Activated CD4-positive, alpha-beta T cell treated with anti-CD3 and anti-CD28 coated beads, Interleukin-2, amount 10 ng/mL, durations not matched to agents 24 days and 14 days (primary cell): ENCODE measurements at regions of chr22 and their contacts with region 1.

Region 1: GRCh38 chr22:24284747-24285203 is 14.1 kb downstream of the SPECC1L start:
- DNase-seq: peak; percentile 62
- H3K4me3 Mint-ChIP-seq: peak overlapping the region; percentile 47
- H3K27ac Mint-ChIP-seq: peak overlapping the region; percentile 86
- H3K4me1 Mint-ChIP-seq: peaks cover 37% of the 10 kb centered on the region
- H3K27me3 Mint-ChIP-seq: peaks cover 3% of the 10 kb centered on the region

Region 2: DNA sequence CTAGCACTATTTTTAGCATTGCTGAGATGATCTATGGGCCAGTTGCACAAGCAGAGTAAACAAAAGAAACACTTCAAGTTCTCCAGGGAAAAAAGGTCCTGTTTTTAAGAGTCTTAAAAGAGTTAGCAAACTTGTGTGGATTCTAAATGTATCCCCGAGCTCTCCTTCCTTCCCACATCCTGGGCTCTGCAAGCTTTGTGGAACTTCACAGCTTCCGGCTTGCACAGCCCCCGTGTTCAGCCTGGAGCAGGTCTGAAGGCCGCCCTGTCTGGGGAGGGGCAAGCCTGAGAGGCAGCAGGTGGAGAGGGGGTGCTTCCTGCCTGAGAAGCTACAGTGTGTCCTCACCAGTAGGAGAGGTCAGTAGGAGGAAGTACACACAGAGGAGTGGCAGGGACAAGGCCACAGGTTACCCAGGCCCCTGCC is 138.6 kb before region 1 on chr22:
- intact Hi-C with region 1: no loop called
- DNase-seq: peak; percentile 78
- H3K4me3 Mint-ChIP-seq: peak overlapping the region; percentile 57
- H3K27ac Mint-ChIP-seq: peak overlapping the region; percentile 50
- H3K4me1 Mint-ChIP-seq: peaks cover 41% of the 10 kb centered on the region
- H3K27me3 Mint-ChIP-seq: no peaks in the 10 kb centered on the region

Region 3: DNA sequence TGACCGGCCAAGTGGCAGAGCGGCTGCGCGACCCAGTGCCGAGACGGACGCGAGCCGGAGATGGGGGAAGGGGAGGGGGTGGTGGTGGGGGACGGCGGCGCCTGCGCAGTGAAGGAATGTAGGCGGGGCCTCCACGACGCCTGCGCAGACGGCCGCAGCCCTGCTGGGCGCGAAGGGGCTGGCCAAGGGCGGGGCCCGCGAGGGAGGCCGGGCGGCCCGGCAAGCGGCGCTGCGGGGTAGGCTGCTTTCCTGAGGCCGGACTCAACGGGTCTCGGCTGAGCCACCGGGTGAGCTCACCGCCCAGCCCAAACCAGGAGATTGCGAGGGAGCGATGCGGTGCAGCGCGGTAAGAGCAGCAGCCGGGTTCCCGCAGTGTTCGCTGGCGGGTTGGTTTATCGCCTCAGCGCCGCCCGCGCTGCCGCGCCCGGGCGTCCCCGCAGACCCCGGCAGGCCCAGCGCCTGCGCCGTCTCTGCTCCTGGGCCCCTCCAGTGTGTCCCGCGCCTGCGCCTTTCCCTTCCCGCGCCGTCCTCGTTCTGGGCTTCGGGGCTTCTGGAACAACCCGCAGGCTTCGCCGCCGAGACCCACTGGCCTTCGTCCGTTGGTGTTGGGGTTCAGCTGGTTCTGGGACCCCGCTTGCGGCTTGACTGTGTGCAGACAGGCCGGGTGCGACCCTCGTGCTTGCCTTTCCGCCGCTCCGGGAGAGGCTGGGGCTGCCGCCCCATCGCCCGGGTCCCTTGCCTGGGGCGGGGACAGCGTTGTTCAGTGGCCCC is 14.0 kb before region 1 on chr22 and contains the start of gene SPECC1L:
- intact Hi-C with region 1: loop called (anchors 1 kb)
- DNase-seq: peak; percentile 98
- H3K4me3 Mint-ChIP-seq: peak within 1 kb of the TSS; percentile 90
- H3K27ac Mint-ChIP-seq: peak within 1 kb of the TSS; percentile 89
- H3K4me1 Mint-ChIP-seq: peaks cover 23% of the 10 kb centered on the region
- H3K27me3 Mint-ChIP-seq: no peaks in the 10 kb centered on the region
- total RNA-seq, gene SPECC1L: 37.2 and 41.9 TPM in 2 replicates

Region 4: GRCh38 chr22:24305260-24305692 is 20.5 kb after region 1 on chr22:
- intact Hi-C with region 1: loop called (anchors 2 kb)
- DNase-seq: peak; percentile 65
- H3K4me3 Mint-ChIP-seq: peak overlapping the region; percentile 10
- H3K27ac Mint-ChIP-seq: peak overlapping the region; percentile 31
- H3K4me1 Mint-ChIP-seq: peaks cover 38% of the 10 kb centered on the region
- H3K27me3 Mint-ChIP-seq: no peaks in the 10 kb centered on the region